ENCODE measurements at regions of chr2 and their contacts with region 1.

Region 1: GRCh38 chr2:210002158-210003157 is at the start of gene RPE:
- DNase-seq: peak; percentile 95 to 99 (median 98)
- ATAC-seq: peak; percentile 98
- H3K4me3 ChIP-seq: peak within 1 kb of the TSS; percentile 76 to 94
- H3K4me3 Mint-ChIP-seq: peak within 1 kb of the TSS; percentile 92
- H3K27ac ChIP-seq: peak within 1 kb of the TSS; percentile 60 to 84
- H3K27ac Mint-ChIP-seq: peak within 1 kb of the TSS; percentile 96
- H3K4me1 ChIP-seq: peaks cover 47% of the 10 kb centered on the region
- H3K4me1 Mint-ChIP-seq: peaks cover 64% of the 10 kb centered on the region
- H3K27me3 ChIP-seq: no peaks in the 10 kb centered on the region
- H3K27me3 Mint-ChIP-seq: no peaks in the 10 kb centered on the region
- CTCF ChIP-seq: no peak
- total RNA-seq, gene RPE: 7.2 to 10.5 TPM

Region 2: GRCh38 chr2:208254871-208255556 is 1747.4 kb before region 1 on chr2 and contains the start of gene IDH1:
- CTCF ChIA-PET with region 1: no interaction called
- POLR2A ChIA-PET with region 1: no interaction called
- intact Hi-C with region 1: loop called in 1 of 2 experiments (anchors 1 kb)
- DNase-seq: peak; percentile 83 to 97 (median 93)
- ATAC-seq: peak; percentile 85
- H3K4me3 ChIP-seq: peak within 1 kb of the TSS; percentile 99
- H3K4me3 Mint-ChIP-seq: peak within 1 kb of the TSS; percentile 94
- H3K27ac ChIP-seq: peak within 1 kb of the TSS; percentile 31 to 51
- H3K27ac Mint-ChIP-seq: peak within 1 kb of the TSS; percentile 83
- H3K4me1 ChIP-seq: peaks cover 13% of the 10 kb centered on the region
- H3K4me1 Mint-ChIP-seq: peaks cover 31% of the 10 kb centered on the region
- H3K27me3 ChIP-seq: no peaks in the 10 kb centered on the region
- H3K27me3 Mint-ChIP-seq: no peaks in the 10 kb centered on the region
- CTCF ChIP-seq: no peak
- total RNA-seq, gene IDH1: 3.0 to 4.0 TPM

Region 3: GRCh38 chr2:209977386-209978239 is 24.8 kb before region 1 on chr2:
- CTCF ChIA-PET with region 1: interaction called, 4 read pairs
- POLR2A ChIA-PET with region 1: no interaction called
- intact Hi-C with region 1: loop called in 1 of 2 experiments (anchors 1 kb)
- DNase-seq: peak in 2 of 9 experiments; percentile 59 to 69
- ATAC-seq: peak; percentile 44
- H3K4me3 ChIP-seq: no peak overlapping the region
- H3K4me3 Mint-ChIP-seq: no peak overlapping the region
- H3K27ac ChIP-seq: no peak overlapping the region
- H3K27ac Mint-ChIP-seq: no peak overlapping the region
- H3K4me1 ChIP-seq: no peaks in the 10 kb centered on the region
- H3K4me1 Mint-ChIP-seq: no peaks in the 10 kb centered on the region
- H3K27me3 ChIP-seq: no peaks in the 10 kb centered on the region
- H3K27me3 Mint-ChIP-seq: peaks cover 5% of the 10 kb centered on the region
- CTCF ChIP-seq: peak; percentile 79

Region 4: GRCh38 chr2:210171309-210172203 is 169.1 kb after region 1 on chr2 and contains the start of gene KANSL1L:
- CTCF ChIA-PET with region 1: no interaction called
- POLR2A ChIA-PET with region 1: no interaction called
- intact Hi-C with region 1: loop called (anchors 1 kb)
- DNase-seq: peak; percentile 93 to 99 (median 97)
- ATAC-seq: peak; percentile 88
- H3K4me3 ChIP-seq: peak within 1 kb of the TSS; percentile 85 to 88
- H3K4me3 Mint-ChIP-seq: peak within 1 kb of the TSS; percentile 99
- H3K27ac ChIP-seq: peak within 1 kb of the TSS; percentile 80 to 91
- H3K27ac Mint-ChIP-seq: peak within 1 kb of the TSS; percentile 97
- H3K4me1 ChIP-seq: peaks cover 10% of the 10 kb centered on the region
- H3K4me1 Mint-ChIP-seq: peaks cover 31% of the 10 kb centered on the region
- H3K27me3 ChIP-seq: no peaks in the 10 kb centered on the region
- H3K27me3 Mint-ChIP-seq: no peaks in the 10 kb centered on the region
- CTCF ChIP-seq: no peak
- total RNA-seq, gene KANSL1L: 4.2 to 4.7 TPM

Region 5: DNA sequence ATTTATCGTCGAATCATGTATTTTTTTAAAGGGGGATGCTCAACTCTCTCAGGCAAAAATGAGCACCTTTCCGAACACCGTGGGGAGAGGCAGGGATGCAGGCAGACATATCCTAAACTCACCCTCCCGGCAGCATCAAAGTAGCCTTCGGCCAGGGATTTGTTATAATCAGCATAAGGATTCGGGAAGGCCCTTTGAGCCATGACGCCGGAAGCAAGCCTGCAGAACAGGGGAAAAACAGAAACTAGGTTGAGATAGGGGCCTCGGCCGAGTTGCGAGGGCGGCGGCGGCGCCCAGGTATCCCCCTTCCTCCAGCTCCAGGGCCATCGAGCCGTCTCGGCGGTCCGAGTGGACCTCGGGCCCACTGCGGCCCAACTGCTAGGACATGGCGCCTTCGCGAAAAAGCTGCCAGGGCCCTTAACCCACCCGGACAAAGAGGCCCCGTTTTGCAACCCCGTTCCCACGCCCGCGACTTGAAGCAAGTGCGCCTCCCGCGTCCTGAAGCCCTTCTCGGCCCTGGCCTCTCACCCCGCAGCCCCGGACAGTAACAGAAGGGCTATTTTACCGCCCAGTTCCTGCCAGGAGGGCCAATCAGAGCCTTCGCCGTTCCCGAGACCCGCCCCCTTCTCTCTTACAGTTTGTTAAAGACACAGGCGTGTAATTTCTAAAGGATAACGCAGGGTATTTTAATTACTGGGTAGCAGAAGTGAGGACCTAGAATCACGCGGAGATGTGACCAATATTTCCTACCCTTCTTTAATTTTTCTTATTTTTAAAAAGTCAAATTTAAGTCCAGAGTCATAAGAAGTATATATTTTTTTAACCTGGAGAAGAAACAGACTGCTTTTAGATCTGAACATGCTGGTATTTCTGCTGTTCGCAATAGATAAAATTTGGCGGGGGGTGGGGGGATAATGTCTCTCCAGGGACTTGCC is 474.0 kb after region 1 on chr2 and contains the start of gene LANCL1:
- CTCF ChIA-PET with region 1: no interaction called
- POLR2A ChIA-PET with region 1: no interaction called
- intact Hi-C with region 1: loop called (anchors 1 to 2 kb)
- DNase-seq: peak; percentile 65 to 88 (median 80)
- ATAC-seq: peak; percentile 96
- H3K4me3 ChIP-seq: peak within 1 kb of the TSS; percentile 87 to 91
- H3K4me3 Mint-ChIP-seq: peak within 1 kb of the TSS; percentile 100
- H3K27ac ChIP-seq: peak within 1 kb of the TSS; percentile 88 to 89
- H3K27ac Mint-ChIP-seq: peak within 1 kb of the TSS; percentile 100
- H3K4me1 ChIP-seq: peaks cover 26% of the 10 kb centered on the region
- H3K4me1 Mint-ChIP-seq: peaks cover 73% of the 10 kb centered on the region
- H3K27me3 ChIP-seq: no peaks in the 10 kb centered on the region
- H3K27me3 Mint-ChIP-seq: no peaks in the 10 kb centered on the region
- CTCF ChIP-seq: no peak
- total RNA-seq, gene LANCL1: 15.5 to 19.1 TPM